HEK293 (cell line): ENCODE measurements at regions of chr16 and their contacts with region 1.

Region 1: DNA sequence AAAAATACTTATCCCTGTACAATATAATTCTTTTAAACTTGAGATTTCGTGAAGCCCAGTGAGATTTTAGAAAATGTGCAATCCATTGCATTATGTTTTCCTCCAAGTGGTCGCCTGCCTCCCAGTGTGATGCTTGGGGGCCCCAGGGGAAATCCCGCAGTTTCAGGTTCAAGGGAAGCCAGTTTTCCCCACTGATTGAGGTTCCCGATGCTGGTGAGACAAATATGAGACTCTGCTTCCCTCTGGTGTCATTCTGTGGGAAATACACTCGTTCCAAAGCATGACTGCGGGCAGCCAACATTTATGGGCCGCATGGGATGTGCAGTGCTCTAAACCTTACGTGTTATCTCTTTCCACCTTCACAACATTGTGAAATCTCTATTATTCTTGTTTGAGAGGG is 200.8 kb downstream of the PRKCB start:
- H3K4me3 ChIP-seq: no peak overlapping the region
- H3K27ac ChIP-seq: no peak overlapping the region
- H3K4me1 ChIP-seq: no peaks in the 10 kb centered on the region
- CTCF ChIP-seq: peak; percentile 75

Region 2: GRCh38 chr16:23734176-23734893 is 302.3 kb before region 1 on chr16:
- CTCF ChIA-PET with region 1: interaction called, 25 read pairs
- POLR2A ChIA-PET with region 1: no interaction called
- H3K4me3 ChIP-seq: no peak overlapping the region
- H3K27ac ChIP-seq: no peak overlapping the region
- H3K4me1 ChIP-seq: no peaks in the 10 kb centered on the region
- CTCF ChIP-seq: no peak

Region 3: GRCh38 chr16:23796941-23797340 is 239.7 kb before region 1 on chr16:
- CTCF ChIA-PET with region 1: interaction called, 25 read pairs
- POLR2A ChIA-PET with region 1: no interaction called
- H3K4me3 ChIP-seq: no peak overlapping the region
- H3K27ac ChIP-seq: no peak overlapping the region
- H3K4me1 ChIP-seq: no peaks in the 10 kb centered on the region
- CTCF ChIP-seq: no peak

Region 4: GRCh38 chr16:23803591-23804123 is 233.0 kb before region 1 on chr16:
- CTCF ChIA-PET with region 1: interaction called, 25 read pairs
- POLR2A ChIA-PET with region 1: no interaction called
- H3K4me3 ChIP-seq: no peak overlapping the region
- H3K27ac ChIP-seq: no peak overlapping the region
- H3K4me1 ChIP-seq: no peaks in the 10 kb centered on the region
- CTCF ChIP-seq: peak; percentile 76

Region 5: DNA sequence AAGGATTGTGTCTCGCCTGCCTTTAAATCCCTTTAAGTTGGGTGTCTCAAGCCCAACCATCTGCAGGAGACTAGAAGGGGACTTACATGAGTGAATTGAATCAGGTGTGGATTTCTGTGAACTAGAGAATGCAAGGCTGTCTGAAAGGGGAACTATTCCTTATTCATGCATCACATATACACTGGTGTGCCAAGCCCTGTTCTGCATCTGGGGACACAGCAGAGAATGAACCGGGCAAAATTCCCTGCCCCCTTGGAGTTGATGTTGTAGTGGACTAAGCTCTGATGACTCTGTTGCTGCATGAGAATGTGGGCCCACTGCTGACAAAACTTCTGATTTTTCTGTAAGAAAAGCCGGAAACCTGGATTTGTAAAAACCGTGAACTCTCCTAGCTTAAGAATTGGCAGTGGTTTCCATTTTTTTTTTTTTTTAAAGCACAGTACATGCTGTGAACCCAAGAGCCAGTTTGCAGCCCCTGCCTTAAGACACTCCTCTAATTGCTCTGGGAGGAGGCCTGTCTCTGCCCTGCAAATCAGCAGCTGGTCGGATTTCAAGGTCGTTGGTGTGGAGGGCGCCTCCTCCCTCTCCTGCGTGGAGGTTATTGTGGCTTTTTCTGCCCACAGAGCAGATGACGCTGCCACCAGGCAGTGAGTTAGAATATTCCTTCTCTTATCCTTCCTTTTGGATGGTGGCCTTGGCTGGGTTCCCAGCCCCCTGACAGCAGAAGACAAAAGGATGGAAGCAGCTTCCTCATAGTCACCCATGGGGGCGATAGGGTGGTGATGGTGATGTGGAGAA is 69.8 kb before region 1 on chr16:
- CTCF ChIA-PET with region 1: no interaction called
- POLR2A ChIA-PET with region 1: no interaction called
- H3K4me3 ChIP-seq: no peak overlapping the region
- H3K27ac ChIP-seq: no peak overlapping the region
- H3K4me1 ChIP-seq: no peaks in the 10 kb centered on the region
- CTCF ChIP-seq: 0 out of 2 replicates have a peak, but pooled peaks have one; percentile 16

Region 6: GRCh38 chr16:24010440-24011089 is 26.0 kb before region 1 on chr16:
- CTCF ChIA-PET with region 1: interaction called, 10 read pairs
- POLR2A ChIA-PET with region 1: no interaction called
- H3K4me3 ChIP-seq: no peak overlapping the region
- H3K27ac ChIP-seq: no peak overlapping the region
- H3K4me1 ChIP-seq: no peaks in the 10 kb centered on the region; the same call in 1 of the 2 replicates
- CTCF ChIP-seq: peak; percentile 43; the same call in 1 of the 2 replicates

Region 7: DNA sequence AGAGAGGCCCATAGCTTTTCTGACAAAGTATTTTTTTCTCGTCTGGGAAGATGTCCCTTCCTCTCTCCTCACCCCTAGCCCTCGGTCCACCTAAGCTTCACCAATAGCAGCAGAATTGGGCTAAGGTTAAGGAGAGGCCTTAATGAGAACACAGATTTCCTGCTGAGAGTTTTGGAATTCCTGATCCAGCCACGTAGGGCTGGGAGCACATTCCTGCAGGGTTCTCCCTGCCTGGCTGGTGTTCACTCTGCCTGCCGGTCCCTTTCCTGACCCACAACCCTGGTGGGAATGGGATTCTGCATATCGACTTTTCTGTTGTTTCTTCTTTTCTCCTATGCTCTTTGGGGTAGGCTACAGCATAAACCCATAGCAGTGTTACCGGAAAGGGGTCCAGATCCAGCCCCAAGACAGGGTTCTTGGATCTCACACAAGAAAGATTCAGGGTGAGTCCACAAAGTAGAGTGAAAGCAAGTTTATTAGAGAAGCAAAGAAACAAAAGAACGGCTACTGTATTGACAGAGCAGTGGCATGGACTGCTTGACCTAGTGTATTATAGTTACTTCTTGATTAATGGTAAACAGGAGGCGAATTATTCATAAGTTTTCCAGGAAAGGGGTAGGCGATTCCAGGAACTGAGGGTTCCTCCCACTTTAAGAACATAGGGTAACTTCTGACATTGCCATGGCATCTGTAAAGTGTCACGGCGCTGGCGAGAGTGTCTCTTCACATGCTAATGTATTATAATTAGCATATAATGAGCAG is 312.5 kb after region 1 on chr16:
- CTCF ChIA-PET with region 1: no interaction called
- POLR2A ChIA-PET with region 1: no interaction called
- H3K4me3 ChIP-seq: no peak overlapping the region
- H3K27ac ChIP-seq: no peak overlapping the region
- H3K4me1 ChIP-seq: peaks cover 4% of the 10 kb centered on the region; the same call in 1 of the 2 replicates
- CTCF ChIP-seq: no peak